ENCODE measurements at regions of chr14 and their contacts with region 1.

Region 1: DNA sequence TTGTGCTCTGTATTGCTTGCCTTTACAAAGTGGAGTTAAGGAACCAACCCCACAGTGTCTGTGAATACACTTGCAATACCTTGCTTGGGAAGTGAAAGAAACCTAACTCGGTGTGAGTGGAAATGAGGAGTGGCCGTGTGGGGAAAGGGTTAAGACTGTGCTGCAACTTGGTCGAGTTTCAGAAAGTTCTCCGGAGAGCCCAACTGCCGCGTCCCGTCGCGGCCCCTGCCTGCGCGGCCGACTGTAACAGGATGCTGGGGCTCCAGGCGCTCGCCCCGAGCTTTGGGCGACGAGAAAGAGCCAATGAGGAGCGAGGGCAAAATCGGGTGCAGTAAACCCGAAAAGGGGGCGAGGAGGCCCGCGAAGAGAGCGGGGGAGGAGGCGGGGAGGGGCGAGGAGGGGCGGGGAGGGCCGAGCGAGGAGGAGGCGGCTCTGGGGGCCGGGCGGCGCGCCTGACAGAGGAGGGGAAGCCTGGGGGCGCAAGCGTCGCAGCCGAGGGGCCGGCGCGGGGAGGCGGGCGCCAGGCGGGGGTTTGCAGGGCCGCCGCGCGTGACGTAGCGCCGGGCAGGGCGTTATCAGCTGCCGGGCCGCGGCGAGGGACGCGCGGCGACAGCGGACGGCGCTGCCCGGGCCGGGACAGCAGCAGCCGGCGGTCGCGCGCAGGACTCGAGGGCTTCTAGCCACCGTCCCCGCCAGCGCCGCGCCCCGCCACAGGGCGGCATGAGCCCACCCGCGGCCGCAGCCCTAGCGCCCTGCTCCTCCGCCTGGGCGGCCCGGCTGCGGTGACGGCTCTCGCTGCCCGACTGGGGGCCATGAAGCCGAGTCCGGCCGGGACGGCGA is at the start of gene DACT1:
- DNase-seq: peak; percentile 12 to 86 (median 71)

Region 2: DNA sequence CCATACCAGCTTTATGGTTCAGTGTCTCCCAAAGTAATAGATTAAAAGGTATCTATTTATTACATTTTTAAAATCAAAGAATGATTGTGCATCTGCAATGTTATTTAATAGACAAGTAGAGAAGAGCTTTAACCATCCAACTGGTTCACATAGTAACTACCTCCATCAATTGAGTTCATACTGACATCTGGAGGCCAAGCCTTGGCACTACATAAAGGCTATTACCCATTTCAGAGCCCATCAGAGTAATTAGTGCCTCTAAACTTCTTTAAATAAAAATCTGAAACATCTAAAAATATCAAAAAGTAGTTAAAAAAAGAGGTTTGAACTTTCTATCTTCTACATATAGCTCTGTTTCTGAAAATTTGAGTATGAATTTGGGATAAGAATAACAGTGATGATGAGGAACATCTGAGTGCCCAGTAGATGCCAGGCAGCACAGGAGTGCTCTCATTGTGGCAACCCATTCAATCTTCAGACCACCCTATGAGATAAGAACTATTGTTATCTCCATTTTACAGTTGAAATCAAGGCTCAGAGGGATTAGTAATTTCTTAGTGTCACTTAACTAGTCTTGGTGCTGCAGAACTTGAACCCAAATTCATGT is 417.9 kb after region 1 on chr14:
- intact Hi-C with region 1: loop called (anchors 10 kb)
- DNase-seq: peak in 29 of 42 donors; percentile 4 to 77 (median 48)

Measured in head of caudate nucleus (tissue), 42 donors.